PC-3 (cell line): ENCODE measurements at regions of chr18 and their contacts with region 1.

Region 1: DNA sequence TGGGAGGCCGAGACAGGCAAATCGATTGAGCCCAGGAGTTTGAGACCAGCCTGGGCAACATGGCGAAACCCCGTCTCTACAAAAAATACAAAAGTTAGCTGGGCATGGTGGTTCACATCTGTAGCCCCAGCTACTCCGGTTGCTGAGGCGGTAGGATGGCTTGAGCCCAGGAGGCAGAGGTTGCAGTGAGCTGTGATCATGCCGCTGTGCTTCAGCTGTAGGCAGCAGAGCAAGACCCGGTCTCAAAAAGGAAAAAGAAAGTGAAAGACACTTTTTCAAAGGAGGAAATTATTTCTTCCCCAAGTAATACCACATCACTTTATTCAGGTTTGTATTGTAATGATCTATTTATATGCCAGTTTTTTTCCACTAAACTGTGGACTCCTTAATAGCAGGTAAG is 35.7 kb upstream of the TAF4B start:
- DNase-seq: no peak
- ATAC-seq: no peak
- H3K4me3 ChIP-seq: no peak overlapping the region
- H3K27ac ChIP-seq: no peak overlapping the region
- H3K4me1 ChIP-seq: no peaks in the 10 kb centered on the region
- H3K27me3 ChIP-seq: no peaks in the 10 kb centered on the region
- CTCF ChIP-seq: no peak

Region 2: DNA sequence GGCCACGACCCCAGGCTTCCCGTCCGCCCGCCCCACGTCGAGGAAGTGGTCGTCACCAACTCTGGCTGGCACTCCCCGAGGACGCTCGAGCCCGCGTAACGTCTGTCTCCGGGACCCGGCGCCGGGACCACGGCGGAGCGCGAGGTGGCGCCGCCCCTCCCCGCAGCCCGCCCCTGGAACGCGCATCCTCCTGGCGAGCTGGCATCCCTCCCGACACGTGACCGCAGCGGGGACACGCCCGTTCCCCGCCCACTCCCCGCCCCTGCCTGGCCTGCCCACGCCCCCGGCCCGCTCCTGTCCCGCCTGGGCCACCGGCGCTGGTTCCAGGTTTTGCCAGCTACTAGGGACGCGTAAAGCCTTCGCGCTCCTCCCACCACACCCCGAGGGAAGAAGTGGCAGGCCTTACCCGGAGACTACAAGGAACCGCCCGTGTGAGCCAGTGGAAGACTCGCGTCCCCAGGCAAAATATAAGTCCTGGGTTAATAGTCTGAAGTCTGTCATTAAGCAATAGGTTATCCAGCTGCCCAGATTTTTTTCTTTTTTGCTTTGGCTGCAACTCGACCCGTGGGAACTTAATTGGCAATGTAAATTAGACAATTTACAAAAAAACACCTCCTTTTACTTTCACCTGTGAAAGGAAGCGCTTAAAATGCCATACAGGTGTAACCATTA is 1792.7 kb before region 1 on chr18 and contains the start of gene OSBPL1A:
- CTCF ChIA-PET with region 1: interaction called, 10 read pairs
- POLR2A ChIA-PET with region 1: no interaction called
- intact Hi-C with region 1: no loop called
- DNase-seq: peak; percentile 93
- ATAC-seq: peak; percentile 88
- H3K4me3 ChIP-seq: peak within 1 kb of the TSS; percentile 80
- H3K27ac ChIP-seq: peak within 1 kb of the TSS; percentile 24
- H3K4me1 ChIP-seq: peaks cover 24% of the 10 kb centered on the region
- H3K27me3 ChIP-seq: no peaks in the 10 kb centered on the region
- CTCF ChIP-seq: no peak
- total RNA-seq, gene OSBPL1A: 31.1 and 39.7 TPM in 2 replicates

Region 3: DNA sequence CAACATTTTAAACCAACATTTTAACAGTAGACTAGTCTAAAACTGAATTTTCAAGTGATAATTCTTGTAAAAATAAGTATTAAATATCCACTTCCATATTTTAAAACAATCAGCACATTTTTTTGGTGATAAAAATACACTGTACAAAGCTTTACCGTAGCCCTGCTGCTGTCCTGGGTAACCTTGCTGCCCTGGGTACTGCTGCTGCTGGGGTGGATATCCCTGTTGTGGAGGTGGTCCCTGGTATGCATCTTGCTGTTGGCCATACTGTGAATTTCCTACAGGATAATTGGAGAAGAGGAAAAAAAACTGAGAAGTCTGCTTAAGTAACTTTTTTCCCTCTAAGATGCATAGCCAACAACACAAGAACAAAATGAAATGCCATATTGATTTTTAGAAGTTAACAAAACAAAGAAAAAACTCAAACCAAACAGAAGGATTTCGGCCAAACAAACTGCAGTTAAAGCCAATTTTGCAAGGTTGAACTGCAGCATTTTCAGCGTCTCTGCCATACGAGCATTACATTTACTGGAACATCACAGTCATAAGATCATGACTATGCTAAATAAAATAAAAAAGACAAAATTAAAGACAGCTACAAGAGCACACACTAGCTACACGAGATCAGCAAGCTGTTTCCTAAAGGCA is 155.5 kb before region 1 on chr18:
- CTCF ChIA-PET with region 1: no interaction called
- POLR2A ChIA-PET with region 1: no interaction called
- intact Hi-C with region 1: no loop called
- DNase-seq: no peak
- ATAC-seq: no peak
- H3K4me3 ChIP-seq: no peak overlapping the region
- H3K27ac ChIP-seq: no peak overlapping the region
- H3K4me1 ChIP-seq: no peaks in the 10 kb centered on the region
- H3K27me3 ChIP-seq: no peaks in the 10 kb centered on the region
- CTCF ChIP-seq: no peak

Region 4: DNA sequence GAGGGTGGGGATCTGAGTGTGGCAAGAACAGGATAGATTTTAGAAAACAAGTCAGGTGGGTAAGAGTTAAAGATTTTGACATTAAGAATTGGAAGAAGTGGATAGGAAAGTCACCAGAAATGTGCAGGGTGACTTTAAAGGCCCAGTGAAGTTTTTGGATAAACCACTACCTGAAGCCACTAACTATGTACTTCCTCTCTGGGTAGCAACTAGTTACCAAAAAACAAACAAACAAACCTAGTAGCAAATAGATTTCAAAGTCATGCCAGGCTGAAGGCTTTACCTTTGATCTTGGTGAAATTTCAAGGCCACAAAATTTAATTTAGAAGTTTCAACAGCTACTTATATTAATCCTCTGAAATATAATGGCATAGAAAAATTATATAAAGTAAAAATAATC is 14.4 kb before region 1 on chr18:
- CTCF ChIA-PET with region 1: no interaction called
- POLR2A ChIA-PET with region 1: no interaction called
- intact Hi-C with region 1: no loop called
- DNase-seq: no peak
- ATAC-seq: no peak
- H3K4me3 ChIP-seq: no peak overlapping the region
- H3K27ac ChIP-seq: no peak overlapping the region
- H3K4me1 ChIP-seq: no peaks in the 10 kb centered on the region
- H3K27me3 ChIP-seq: peaks cover 60% of the 10 kb centered on the region
- CTCF ChIP-seq: no peak